Activated naive CD4-positive, alpha-beta T cell treated with anti-CD3 and anti-CD28 coated beads for 36 hours (primary cell): ENCODE measurements at regions of chr7 and their contacts with region 1.

Region 1: GRCh38 chr7:123865517-123866117 is 20.6 kb downstream of the HYAL4 start:
- DNase-seq: peak; percentile 66
- H3K4me3 Mint-ChIP-seq: no peak overlapping the region
- H3K27ac Mint-ChIP-seq: no peak overlapping the region
- H3K4me1 Mint-ChIP-seq: no peaks in the 10 kb centered on the region
- H3K27me3 Mint-ChIP-seq: peaks cover 3% of the 10 kb centered on the region

Region 2: DNA sequence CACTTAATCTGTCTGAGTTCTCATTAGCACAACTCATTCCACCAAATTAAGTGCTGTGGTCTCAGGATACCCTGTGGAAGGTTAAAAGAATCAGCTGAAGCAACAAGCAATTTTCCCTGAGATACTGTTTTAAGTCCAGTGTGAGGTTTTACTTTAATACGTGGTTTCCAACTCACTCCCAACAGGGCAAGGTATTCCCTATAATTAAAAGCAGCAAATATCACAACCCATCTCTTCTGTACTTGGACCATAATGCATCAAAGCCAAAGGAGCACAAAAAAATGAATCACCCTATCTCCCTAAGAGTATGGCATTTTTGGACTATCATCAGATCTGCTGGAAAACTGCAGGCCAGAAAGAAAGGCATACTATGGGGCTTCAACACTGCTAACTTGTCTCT is 984.3 kb before region 1 on chr7:
- CTCF ChIA-PET with region 1: no interaction called
- intact Hi-C with region 1: no loop called
- DNase-seq: no peak
- H3K4me3 Mint-ChIP-seq: no peak overlapping the region
- H3K27ac Mint-ChIP-seq: no peak overlapping the region
- H3K4me1 Mint-ChIP-seq: peaks cover 5% of the 10 kb centered on the region
- H3K27me3 Mint-ChIP-seq: peaks cover 31% of the 10 kb centered on the region

Region 3: GRCh38 chr7:123580406-123581161 is 285.0 kb before region 1 on chr7:
- CTCF ChIA-PET with region 1: interaction called, 3 read pairs
- intact Hi-C with region 1: loop called (anchors 2 kb)
- DNase-seq: peak; percentile 12
- H3K4me3 Mint-ChIP-seq: no peak overlapping the region
- H3K27ac Mint-ChIP-seq: no peak overlapping the region
- H3K4me1 Mint-ChIP-seq: no peaks in the 10 kb centered on the region
- H3K27me3 Mint-ChIP-seq: peaks cover 9% of the 10 kb centered on the region

Region 4: GRCh38 chr7:123635551-123636359 is 229.9 kb before region 1 on chr7:
- CTCF ChIA-PET with region 1: interaction called, 3 read pairs
- intact Hi-C with region 1: loop called (anchors 2 kb)
- DNase-seq: no peak
- H3K4me3 Mint-ChIP-seq: no peak overlapping the region
- H3K27ac Mint-ChIP-seq: no peak overlapping the region
- H3K4me1 Mint-ChIP-seq: no peaks in the 10 kb centered on the region
- H3K27me3 Mint-ChIP-seq: peaks cover 17% of the 10 kb centered on the region

Region 5: GRCh38 chr7:123682690-123683089 is 182.9 kb before region 1 on chr7:
- CTCF ChIA-PET with region 1: interaction called, 14 read pairs
- intact Hi-C with region 1: loop called (anchors 1 kb)
- DNase-seq: peak; percentile 31
- H3K4me3 Mint-ChIP-seq: no peak overlapping the region
- H3K27ac Mint-ChIP-seq: no peak overlapping the region
- H3K4me1 Mint-ChIP-seq: no peaks in the 10 kb centered on the region
- H3K27me3 Mint-ChIP-seq: no peaks in the 10 kb centered on the region

Region 6: DNA sequence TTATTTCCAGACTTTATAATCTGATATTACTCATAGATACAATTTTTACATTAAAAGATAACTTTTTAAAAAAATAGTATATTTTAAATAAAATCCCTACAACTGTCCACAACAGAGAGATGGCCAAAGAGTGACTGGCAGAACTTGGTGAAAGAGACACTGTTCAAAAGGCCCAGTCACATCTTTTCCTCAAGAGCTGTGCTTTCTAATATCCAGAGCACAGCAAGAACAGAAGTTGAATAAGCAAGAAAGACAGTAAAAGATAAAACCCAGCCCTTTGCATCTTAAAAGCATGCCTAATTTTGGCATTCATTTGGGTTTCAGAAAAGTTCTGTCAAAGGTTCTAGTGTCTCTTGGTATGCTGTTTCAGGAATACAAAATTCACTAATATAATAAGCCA is 123.7 kb before region 1 on chr7:
- CTCF ChIA-PET with region 1: no interaction called
- intact Hi-C with region 1: no loop called
- DNase-seq: no peak
- H3K4me3 Mint-ChIP-seq: no peak overlapping the region
- H3K27ac Mint-ChIP-seq: no peak overlapping the region
- H3K4me1 Mint-ChIP-seq: peaks cover 61% of the 10 kb centered on the region
- H3K27me3 Mint-ChIP-seq: no peaks in the 10 kb centered on the region

Region 7: DNA sequence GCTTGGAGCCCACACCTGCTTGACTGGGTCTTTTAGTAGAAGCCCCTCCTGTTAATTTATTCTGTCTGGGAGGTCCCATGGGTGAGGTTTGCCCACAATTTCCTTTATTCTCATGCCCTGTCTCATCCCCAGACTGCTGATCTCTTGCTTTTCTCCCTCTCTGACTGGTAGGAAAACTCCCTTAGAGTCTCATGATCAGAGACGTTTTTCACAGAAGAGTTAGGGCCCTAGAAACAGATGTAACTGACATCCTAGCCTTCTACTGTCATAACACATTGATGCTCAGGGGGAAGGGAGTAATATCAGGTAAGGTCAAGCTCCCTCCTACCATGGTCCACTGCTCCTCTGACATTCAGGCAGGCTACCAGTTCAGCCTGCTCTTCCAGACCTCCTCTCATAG is 73.1 kb before region 1 on chr7:
- CTCF ChIA-PET with region 1: interaction called, 106 read pairs
- intact Hi-C with region 1: no loop called
- DNase-seq: no peak
- H3K4me3 Mint-ChIP-seq: no peak overlapping the region
- H3K27ac Mint-ChIP-seq: no peak overlapping the region
- H3K4me1 Mint-ChIP-seq: peaks cover 8% of the 10 kb centered on the region
- H3K27me3 Mint-ChIP-seq: no peaks in the 10 kb centered on the region

Region 8: GRCh38 chr7:123823898-123824753 is 41.5 kb before region 1 on chr7:
- CTCF ChIA-PET with region 1: interaction called, 6 read pairs
- intact Hi-C with region 1: loop called (anchors 1 kb)
- DNase-seq: peak; percentile 85
- H3K4me3 Mint-ChIP-seq: no peak overlapping the region
- H3K27ac Mint-ChIP-seq: peak overlapping the region; percentile 76
- H3K4me1 Mint-ChIP-seq: peaks cover 21% of the 10 kb centered on the region
- H3K27me3 Mint-ChIP-seq: peaks cover 13% of the 10 kb centered on the region